Mucosa of descending colon (tissue), 3 donors: ENCODE measurements at regions of chr12 and their contacts with region 1.

Region 1: DNA sequence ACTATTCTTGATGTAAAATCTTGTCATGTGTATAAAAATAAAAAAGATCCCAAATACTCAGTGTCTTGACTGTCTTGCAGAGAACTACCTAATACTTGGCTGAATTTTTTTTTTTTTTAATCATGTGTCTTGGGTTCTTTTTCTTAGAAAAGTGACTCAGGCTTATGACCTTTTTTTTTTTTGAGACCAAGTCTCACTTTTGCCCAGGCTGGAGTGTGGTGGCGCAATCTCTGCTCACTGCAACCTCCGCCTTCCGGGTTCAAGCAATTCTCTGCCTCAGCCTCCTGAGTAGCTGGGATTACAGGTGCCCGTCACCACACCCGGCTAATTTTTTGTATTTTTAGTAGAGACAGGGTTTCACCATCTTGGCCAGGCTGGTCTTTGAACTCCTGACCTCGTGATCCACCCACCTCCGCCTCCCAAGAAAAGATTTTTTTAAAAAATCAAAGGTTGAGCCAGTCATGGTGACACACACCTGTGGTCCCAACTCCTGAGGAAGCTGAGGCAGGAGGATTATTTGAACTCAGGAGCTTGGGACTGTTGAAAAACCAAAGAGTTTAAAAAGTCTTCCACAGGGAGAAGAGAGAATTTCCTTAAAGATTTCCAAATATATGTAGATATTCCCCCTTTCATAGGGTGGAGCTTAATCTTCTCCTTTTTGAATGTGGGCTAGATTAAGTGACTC is 17.7 kb upstream of the TDG start:
- DNase-seq: no peak
- ATAC-seq: no peak
- H3K4me3 ChIP-seq: no peak overlapping the region
- H3K4me1 ChIP-seq: no peaks in the 10 kb centered on the region
- CTCF ChIP-seq: no peak

Region 2: DNA sequence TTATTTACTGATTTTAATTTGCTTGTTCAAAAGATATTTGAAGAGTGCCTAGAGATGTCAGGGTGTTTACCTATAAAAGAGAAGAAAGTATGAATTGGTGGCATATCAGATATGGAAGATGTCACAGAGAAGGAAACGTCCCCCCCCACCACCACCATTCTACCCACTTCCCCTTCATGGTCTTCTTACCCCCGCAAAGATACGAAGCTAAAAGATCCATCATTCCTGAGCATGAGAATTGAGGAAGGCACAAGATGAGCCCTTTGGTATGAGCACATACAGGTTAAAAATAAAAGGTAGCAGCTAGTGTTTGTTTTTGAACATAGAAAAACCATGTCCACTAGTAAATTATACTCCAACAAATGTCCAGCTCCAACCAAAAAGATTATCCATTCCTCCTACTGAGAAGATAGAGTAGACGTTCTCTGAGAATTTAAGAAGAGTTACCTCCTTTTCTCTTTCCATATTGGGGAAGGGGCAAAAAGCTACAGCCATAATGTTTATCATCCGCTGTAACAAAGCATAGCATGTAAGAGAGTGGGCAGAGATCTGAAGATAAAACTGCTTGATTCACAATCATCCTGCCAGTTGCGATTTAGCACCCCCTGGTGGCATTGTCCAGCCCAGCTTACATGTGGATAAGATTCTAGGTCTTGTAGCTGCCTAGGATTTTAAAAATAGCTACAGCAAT is 160.9 kb after region 1 on chr12:
- intact Hi-C with region 1: loop called in 1 of 2 experiments (anchors 10 kb)
- DNase-seq: peak; percentile 61 to 96 (median 82)
- ATAC-seq: peak; percentile 88
- H3K4me3 ChIP-seq: no peak overlapping the region
- H3K4me1 ChIP-seq: no peaks in the 10 kb centered on the region
- CTCF ChIP-seq: peak; percentile 70